PC-9 (cell line): ENCODE measurements at regions of chr10 and their contacts with region 1.

Region 1: GRCh38 chr10:23293145-23293724 is 51.4 kb downstream of the C10orf67 start:
- DNase-seq: no peak
- H3K4me3 ChIP-seq: no peak overlapping the region
- H3K27ac ChIP-seq: no peak overlapping the region
- H3K4me1 ChIP-seq: no peaks in the 10 kb centered on the region
- H3K27me3 ChIP-seq: no peaks in the 10 kb centered on the region
- CTCF ChIP-seq: peak; percentile 59

Region 2: DNA sequence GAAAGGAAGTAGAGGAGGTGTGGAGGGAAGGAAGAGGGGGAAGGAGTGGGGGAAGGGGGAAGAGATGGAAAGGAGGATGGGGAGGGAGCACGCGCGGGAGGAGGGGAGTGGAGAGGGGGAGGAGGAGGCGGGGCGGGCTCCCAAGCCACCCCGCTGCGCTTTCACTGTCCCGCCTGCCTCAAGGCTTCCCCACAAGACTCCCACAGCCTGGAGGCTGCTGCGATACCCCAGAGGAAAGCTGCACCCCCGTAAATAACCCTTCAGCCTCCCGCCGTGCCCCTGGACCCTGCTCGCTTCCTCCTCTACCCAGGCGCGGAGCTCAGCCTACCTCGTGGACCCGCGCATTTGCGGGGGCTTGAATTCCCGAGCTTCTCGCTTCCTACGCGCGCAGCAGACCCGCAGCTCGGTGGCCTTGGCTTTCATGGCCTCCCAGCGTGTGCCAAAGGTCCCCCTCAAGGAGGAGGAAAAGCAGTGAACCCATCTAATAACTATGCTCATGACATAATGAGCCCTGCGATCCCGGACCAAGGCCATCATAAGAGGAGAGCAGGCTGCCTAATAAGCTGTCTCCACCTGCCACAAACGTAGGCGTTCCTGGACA is 51.1 kb after region 1 on chr10 and contains the start of gene C10orf67:
- CTCF ChIA-PET with region 1: no interaction called
- POLR2A ChIA-PET with region 1: no interaction called
- intact Hi-C with region 1: no loop called
- DNase-seq: peak; percentile 49 to 59
- H3K4me3 ChIP-seq: peak within 1 kb of the TSS; percentile 63
- H3K27ac ChIP-seq: peak within 1 kb of the TSS; percentile 82
- H3K4me1 ChIP-seq: peaks cover 56% of the 10 kb centered on the region
- H3K27me3 ChIP-seq: no peaks in the 10 kb centered on the region
- CTCF ChIP-seq: no peak
- total RNA-seq, gene C10orf67: 1.2 and 1.3 TPM in 2 replicates

Region 3: DNA sequence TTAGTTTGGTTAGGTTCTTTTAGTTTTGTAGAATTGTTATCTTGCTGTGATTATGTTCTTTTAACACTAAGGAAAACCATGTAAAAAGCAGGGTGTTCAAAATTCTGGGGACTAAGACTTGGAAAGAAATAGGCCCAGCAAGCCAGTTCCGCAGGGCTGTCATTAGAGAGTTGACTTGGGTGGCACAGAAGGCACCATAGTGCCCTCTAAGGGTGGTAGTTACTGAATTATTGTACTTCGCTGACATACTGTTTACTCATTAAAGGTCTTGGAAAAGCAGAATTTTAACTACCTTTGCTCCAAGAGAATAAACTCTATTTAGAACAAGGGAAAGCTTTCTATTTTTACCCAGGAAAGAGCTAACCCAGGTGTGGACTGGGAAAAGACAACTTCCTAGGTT is 232.2 kb after region 1 on chr10:
- CTCF ChIA-PET with region 1: no interaction called
- POLR2A ChIA-PET with region 1: interaction called, 3 read pairs
- intact Hi-C with region 1: loop called (anchors 2 kb)
- DNase-seq: peak in 1 of 2 experiments; percentile 19
- H3K4me3 ChIP-seq: no peak overlapping the region
- H3K27ac ChIP-seq: no peak overlapping the region
- H3K4me1 ChIP-seq: peaks cover 10% of the 10 kb centered on the region; the same call in 1 of the 2 replicates
- H3K27me3 ChIP-seq: no peaks in the 10 kb centered on the region
- CTCF ChIP-seq: peak; percentile 60

Region 4: GRCh38 chr10:23702977-23703414 is 409.8 kb after region 1 on chr10:
- CTCF ChIA-PET with region 1: interaction called, 3 read pairs
- POLR2A ChIA-PET with region 1: no interaction called
- intact Hi-C with region 1: loop called (anchors 2 kb)
- DNase-seq: peak; percentile 38 to 50
- H3K4me3 ChIP-seq: no peak overlapping the region
- H3K27ac ChIP-seq: no peak overlapping the region
- H3K4me1 ChIP-seq: no peaks in the 10 kb centered on the region
- H3K27me3 ChIP-seq: no peaks in the 10 kb centered on the region; the same call in 1 of the 2 replicates
- CTCF ChIP-seq: peak; percentile 79